Heart left ventricle (tissue), 16 donors: ENCODE measurements at regions of chr2 and their contacts with region 1.

Region 1: GRCh38 chr2:1910592-1911246 is 166.4 kb upstream of the PXDN start:
- DNase-seq: no peak
- ATAC-seq: peak in 3 of 4 donors; percentile 30 to 63 (median 59)
- H3K4me3 ChIP-seq: no peak overlapping the region
- H3K27ac ChIP-seq: no peak overlapping the region
- H3K4me1 ChIP-seq: no peaks in the 10 kb centered on the region
- H3K27me3 ChIP-seq: peaks cover 0 to 6% (median 0%) of the 10 kb centered on the region in 9 donors
- CTCF ChIP-seq: peak in 11 of 12 donors; percentile 40 to 64 (median 49)
- POLR2A ChIP-seq: no peak

Region 2: DNA sequence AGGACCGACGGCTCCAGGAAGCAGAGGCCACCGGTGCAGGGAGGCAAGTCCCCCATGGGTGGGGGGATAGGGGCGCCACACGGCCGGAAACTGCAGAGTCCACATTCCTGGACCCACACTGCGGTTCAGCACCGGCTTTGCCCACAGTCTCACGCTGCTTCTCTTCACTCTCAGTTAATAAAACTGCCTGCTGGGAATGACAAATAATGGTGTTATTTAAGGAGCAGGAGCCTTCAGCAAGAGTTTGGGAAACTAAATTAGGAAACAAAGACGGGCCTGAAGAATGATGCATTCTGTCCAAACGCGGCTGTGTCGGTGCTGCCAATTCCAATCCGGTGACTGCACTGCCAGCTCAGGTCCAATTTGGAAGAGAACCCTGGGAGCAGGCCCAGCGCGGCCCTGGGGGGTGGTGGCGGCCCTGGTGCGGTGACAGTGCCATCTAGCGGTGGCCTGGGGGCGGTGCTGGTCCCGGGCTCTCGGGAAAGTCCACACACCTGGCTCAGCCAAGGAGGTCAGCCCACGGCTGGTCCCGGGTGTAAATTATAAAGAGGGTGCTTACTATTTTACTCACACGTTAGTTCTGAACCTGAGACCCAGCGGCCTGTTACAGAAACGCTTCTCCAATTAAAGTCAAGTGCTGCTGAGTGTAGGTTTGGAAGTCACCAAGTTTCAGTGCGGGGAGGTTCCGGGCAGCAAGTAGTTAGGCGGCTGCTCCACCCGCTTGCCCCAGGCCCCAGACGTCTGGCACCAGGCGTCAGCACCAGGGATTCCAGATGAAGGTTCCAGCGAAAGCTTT is 93.3 kb before region 1 on chr2:
- intact Hi-C with region 1: no loop called
- DNase-seq: peak; percentile 86 to 93 (median 89)
- ATAC-seq: peak; percentile 92 to 96 (median 94)
- H3K4me3 ChIP-seq: peak overlapping the region in 2 of 12 donors; percentile 3 to 24
- H3K27ac ChIP-seq: peak overlapping the region; percentile 31 to 95 (median 79)
- H3K4me1 ChIP-seq: peaks cover 0 to 25% (median 12%) of the 10 kb centered on the region in 12 donors
- H3K27me3 ChIP-seq: no peaks in the 10 kb centered on the region
- CTCF ChIP-seq: peak; percentile 90 to 99 (median 98)
- POLR2A ChIP-seq: no peak

Region 3: GRCh38 chr2:2101924-2102323 is 191.2 kb after region 1 on chr2:
- intact Hi-C with region 1: loop called in 1 of 10 experiments (anchors 10 kb)
- DNase-seq: no peak
- ATAC-seq: no peak
- H3K4me3 ChIP-seq: no peak overlapping the region
- H3K27ac ChIP-seq: no peak overlapping the region
- H3K4me1 ChIP-seq: peaks cover 0 to 1% (median 0%) of the 10 kb centered on the region in 12 donors
- H3K27me3 ChIP-seq: peaks cover 0 to under 1% (median 0%) of the 10 kb centered on the region in 9 donors
- CTCF ChIP-seq: peak in 7 of 12 donors; percentile 4 to 32 (median 20)
- POLR2A ChIP-seq: no peak

Region 4: GRCh38 chr2:2112416-2113105 is 201.8 kb after region 1 on chr2:
- intact Hi-C with region 1: loop called in 2 of 10 experiments (anchors 10 kb)
- DNase-seq: no peak
- ATAC-seq: no peak
- H3K4me3 ChIP-seq: no peak overlapping the region
- H3K27ac ChIP-seq: no peak overlapping the region
- H3K4me1 ChIP-seq: peaks cover 0 to 17% (median 8%) of the 10 kb centered on the region in 12 donors
- H3K27me3 ChIP-seq: peaks cover 0 to 10% (median 0%) of the 10 kb centered on the region in 9 donors
- CTCF ChIP-seq: no peak
- POLR2A ChIP-seq: no peak

Region 5: GRCh38 chr2:2127467-2127866 is 216.7 kb after region 1 on chr2:
- intact Hi-C with region 1: loop called in 1 of 10 experiments (anchors 10 kb)
- DNase-seq: no peak
- ATAC-seq: no peak
- H3K4me3 ChIP-seq: no peak overlapping the region
- H3K27ac ChIP-seq: no peak overlapping the region
- H3K4me1 ChIP-seq: no peaks in the 10 kb centered on the region
- H3K27me3 ChIP-seq: peaks cover 0 to 7% (median 0%) of the 10 kb centered on the region in 9 donors
- CTCF ChIP-seq: no peak
- POLR2A ChIP-seq: no peak

Region 6: DNA sequence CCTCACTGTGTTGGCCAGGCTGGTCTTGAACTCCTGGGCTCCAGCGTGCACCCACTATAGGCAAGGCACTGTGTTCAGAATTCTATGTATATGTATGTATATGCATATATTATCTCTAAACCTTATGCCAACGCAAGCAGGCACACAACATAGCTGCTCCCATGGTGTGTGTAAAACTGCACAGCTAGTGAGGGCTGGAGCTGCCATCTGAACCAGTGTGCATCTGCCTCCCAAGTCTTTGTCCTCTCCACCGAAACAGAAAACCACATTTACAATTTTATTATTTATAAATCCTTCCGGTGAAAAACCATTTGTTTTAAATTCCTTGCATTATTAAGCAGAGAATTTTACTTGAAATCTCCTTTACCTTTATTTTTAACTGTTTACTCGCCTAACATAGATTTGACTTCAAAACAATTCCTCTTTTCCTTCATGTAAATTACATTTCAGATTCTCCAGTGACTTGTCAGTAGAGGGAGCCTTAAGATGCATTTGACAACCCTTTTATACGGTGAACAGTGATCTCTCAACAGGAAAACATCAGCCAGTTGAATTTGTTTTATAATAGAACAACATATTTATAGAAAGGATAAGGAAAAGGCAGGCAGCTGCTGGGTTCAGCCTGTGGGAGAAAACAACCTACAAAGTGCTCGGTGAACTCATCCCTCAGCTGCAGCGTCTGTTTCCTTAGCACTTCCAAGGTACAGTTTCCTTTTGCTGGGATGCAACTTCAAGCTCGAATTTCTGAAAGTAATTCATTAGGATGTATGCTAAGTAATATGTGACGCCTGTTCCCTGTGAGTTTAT is 319.1 kb after region 1 on chr2:
- intact Hi-C with region 1: loop called in 1 of 10 experiments (anchors 10 kb)
- DNase-seq: no peak
- ATAC-seq: no peak
- H3K4me3 ChIP-seq: no peak overlapping the region
- H3K27ac ChIP-seq: no peak overlapping the region
- H3K4me1 ChIP-seq: peaks cover 0 to 3% (median 0%) of the 10 kb centered on the region in 12 donors
- H3K27me3 ChIP-seq: peaks cover 0 to 3% (median 0%) of the 10 kb centered on the region in 9 donors
- CTCF ChIP-seq: peak in 1 of 12 donors; percentile 20
- POLR2A ChIP-seq: no peak

Region 7: DNA sequence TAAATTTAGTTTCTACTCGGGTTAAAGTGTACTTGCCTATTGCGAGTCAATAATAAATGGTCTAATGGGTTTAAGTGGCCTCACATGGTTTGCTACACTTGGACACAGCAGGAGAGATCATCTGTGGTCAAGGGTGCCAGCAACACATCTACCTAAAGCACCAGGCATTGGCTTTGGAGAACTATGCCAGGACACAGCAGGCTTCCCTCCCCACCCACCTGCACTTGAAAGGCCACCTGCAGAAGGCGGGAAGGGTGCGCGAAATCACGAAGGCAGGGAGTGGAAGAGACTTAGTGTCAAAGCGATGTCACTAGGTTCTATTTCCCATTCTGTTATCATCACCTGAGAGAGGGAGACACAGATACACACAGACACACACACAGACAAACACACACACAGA is 375.9 kb after region 1 on chr2:
- intact Hi-C with region 1: loop called in 8 of 10 experiments (anchors 5 to 10 kb)
- DNase-seq: no peak
- ATAC-seq: no peak
- H3K4me3 ChIP-seq: no peak overlapping the region
- H3K27ac ChIP-seq: no peak overlapping the region
- H3K4me1 ChIP-seq: no peaks in the 10 kb centered on the region
- H3K27me3 ChIP-seq: peaks cover 0 to 17% (median 0%) of the 10 kb centered on the region in 9 donors
- CTCF ChIP-seq: no peak
- POLR2A ChIP-seq: no peak

Region 8: DNA sequence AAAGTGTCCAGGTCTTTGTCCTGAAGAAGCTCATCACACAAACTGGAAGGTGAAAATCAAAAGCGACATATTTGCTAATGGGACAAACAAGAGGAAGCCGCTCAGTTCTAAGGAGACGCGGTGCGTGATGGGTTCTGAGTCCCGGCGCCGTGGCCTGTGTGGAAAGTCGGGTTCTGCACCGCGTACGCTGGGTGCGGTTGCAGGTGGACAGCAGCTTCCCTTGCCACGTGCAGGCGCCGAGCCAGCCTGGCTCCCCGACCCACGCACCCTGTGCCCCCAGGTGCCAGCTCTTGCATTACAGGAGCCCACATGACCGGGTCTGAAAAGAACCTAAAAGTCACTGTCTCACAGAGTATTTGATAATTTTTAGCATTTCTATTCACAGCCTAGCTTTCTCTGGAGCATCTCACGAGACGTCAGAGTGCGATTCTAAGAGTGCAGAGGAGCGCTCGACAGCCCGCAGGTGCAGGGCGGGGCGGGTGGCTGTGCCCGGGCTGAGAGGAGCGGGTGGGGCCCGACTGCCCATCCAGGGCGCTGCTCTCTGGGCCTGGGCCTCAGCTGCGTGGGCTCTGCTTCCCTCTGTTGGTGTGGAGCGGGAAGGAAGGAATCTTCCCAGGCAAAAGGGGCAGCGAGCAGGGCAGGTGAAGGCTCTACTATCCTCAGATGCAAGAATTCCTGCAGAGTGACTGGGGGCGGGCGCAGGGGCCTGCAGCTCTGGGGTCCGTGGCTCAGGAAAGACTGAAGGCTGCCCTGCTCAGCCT is 381.0 kb after region 1 on chr2:
- intact Hi-C with region 1: loop called in 9 of 10 experiments (anchors 1 to 10 kb)
- DNase-seq: peak in 1 of 5 donors; percentile 40
- ATAC-seq: peak; percentile 73 to 95 (median 92)
- H3K4me3 ChIP-seq: no peak overlapping the region
- H3K27ac ChIP-seq: no peak overlapping the region
- H3K4me1 ChIP-seq: no peaks in the 10 kb centered on the region
- H3K27me3 ChIP-seq: peaks cover 0 to 31% (median 0%) of the 10 kb centered on the region in 9 donors
- CTCF ChIP-seq: peak in 11 of 12 donors; percentile 42 to 70 (median 65)
- POLR2A ChIP-seq: no peak